SK-N-SH (cell line): ENCODE measurements at regions of chr7 and their contacts with region 1.

Region 1: GRCh38 chr7:122092964-122093797 is 50.9 kb downstream of the AASS start:
- DNase-seq: peak; percentile 26
- H3K4me3 ChIP-seq: no peak overlapping the region
- H3K27ac ChIP-seq: no peak overlapping the region
- H3K4me1 ChIP-seq: no peaks in the 10 kb centered on the region
- H3K27me3 ChIP-seq: no peaks in the 10 kb centered on the region
- CTCF ChIP-seq: peak; percentile 100
- EP300 ChIP-seq: no peak
- RAD21 ChIP-seq: peak; percentile 71

Region 2: DNA sequence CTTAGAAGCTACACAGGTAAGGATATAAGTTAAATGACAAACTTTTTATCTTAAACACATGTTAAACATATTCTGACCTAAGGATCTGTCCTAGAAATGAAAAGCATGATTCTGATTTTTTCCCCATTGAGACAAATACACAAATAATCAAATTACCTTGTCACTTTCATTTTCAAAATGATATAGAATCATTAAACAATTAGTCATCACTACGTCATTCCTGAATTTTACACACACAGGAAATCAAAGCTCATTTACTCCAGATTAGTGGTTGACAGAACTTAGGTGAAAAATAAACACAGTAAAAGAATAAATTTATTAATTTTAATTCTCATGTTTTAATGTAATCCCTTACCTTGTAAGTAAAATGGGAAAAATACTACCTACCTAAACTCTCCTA is 38.1 kb before region 1 on chr7:
- CTCF ChIA-PET with region 1: interaction called, 10 read pairs
- POLR2A ChIA-PET with region 1: no interaction called
- DNase-seq: no peak
- H3K4me3 ChIP-seq: no peak overlapping the region
- H3K27ac ChIP-seq: no peak overlapping the region
- H3K4me1 ChIP-seq: no peaks in the 10 kb centered on the region
- H3K27me3 ChIP-seq: no peaks in the 10 kb centered on the region; the same call in 1 of the 2 replicates
- CTCF ChIP-seq: no peak
- EP300 ChIP-seq: no peak
- RAD21 ChIP-seq: no peak

Region 3: DNA sequence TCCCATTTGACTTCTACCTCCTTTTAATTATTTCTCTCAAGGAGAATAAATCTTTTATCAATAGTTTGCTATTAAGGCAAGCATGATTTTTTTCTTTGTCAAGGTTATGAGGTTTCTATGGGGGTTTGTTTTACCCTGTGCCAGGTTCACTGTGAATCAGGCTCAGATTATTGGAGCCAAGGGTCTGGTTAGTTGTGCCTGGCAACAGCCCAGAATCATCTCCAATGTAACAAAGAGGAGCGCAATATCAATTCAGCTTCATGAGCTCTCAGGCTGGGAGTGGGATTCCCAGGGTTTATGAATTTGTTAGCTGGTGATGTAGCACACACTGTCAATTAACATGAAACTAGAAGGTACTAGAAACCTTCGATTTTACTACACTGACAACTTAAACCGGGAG is 22.3 kb before region 1 on chr7:
- CTCF ChIA-PET with region 1: interaction called, 12 read pairs
- POLR2A ChIA-PET with region 1: no interaction called
- DNase-seq: no peak
- H3K4me3 ChIP-seq: no peak overlapping the region
- H3K27ac ChIP-seq: no peak overlapping the region
- H3K4me1 ChIP-seq: no peaks in the 10 kb centered on the region
- H3K27me3 ChIP-seq: no peaks in the 10 kb centered on the region; the same call in 1 of the 2 replicates
- CTCF ChIP-seq: no peak
- EP300 ChIP-seq: no peak
- RAD21 ChIP-seq: no peak

Region 4: DNA sequence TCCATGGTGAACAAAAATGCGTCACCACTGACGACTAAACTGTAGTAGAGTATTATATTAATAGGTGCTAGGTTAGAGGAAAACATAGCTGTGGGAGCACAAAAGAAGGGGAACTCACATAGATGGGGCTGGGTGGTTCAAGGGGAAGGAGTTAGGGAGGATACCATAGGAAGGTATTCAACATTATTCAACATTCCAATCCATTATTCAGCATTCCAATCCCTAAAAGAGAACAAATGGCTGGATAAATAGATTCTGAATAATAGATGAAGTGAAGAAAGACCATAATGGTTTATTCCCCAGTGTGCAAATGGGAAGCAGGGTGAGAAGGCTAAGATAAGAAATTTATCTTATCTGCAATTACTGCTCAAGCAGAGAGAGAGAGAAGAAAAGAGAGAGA is 10.5 kb before region 1 on chr7:
- CTCF ChIA-PET with region 1: interaction called, 53 read pairs
- POLR2A ChIA-PET with region 1: no interaction called
- DNase-seq: no peak
- H3K4me3 ChIP-seq: no peak overlapping the region
- H3K27ac ChIP-seq: no peak overlapping the region
- H3K4me1 ChIP-seq: no peaks in the 10 kb centered on the region
- H3K27me3 ChIP-seq: no peaks in the 10 kb centered on the region
- CTCF ChIP-seq: no peak
- EP300 ChIP-seq: no peak
- RAD21 ChIP-seq: no peak

Region 5: DNA sequence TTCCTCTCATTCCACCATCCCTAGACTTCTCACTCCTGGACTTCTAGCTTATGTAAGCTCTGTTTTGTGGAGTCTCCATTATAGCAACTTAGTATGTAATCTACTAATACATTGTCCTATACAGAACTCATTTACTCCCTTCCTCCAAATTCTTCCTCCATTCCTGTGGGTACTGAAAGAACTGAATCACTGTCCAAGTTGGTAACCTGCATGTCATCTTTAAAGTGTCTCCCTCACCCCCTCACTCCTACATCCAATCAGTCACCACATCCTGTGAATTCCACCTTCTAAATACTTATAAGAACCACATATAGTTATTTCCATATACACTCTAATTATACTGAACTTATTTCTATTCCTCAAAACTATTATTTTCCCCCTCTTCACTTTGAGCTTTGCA is 30.6 kb after region 1 on chr7:
- CTCF ChIA-PET with region 1: interaction called, 17 read pairs
- POLR2A ChIA-PET with region 1: no interaction called
- DNase-seq: no peak
- H3K4me3 ChIP-seq: no peak overlapping the region
- H3K27ac ChIP-seq: no peak overlapping the region
- H3K4me1 ChIP-seq: no peaks in the 10 kb centered on the region
- H3K27me3 ChIP-seq: peaks cover 14% of the 10 kb centered on the region; the same call in 1 of the 2 replicates
- CTCF ChIP-seq: no peak
- EP300 ChIP-seq: no peak
- RAD21 ChIP-seq: no peak

Region 6: GRCh38 chr7:122135275-122135674 is 42.1 kb after region 1 on chr7:
- CTCF ChIA-PET with region 1: no interaction called
- POLR2A ChIA-PET with region 1: no interaction called
- DNase-seq: no peak
- H3K4me3 ChIP-seq: no peak overlapping the region
- H3K27ac ChIP-seq: no peak overlapping the region
- H3K4me1 ChIP-seq: peaks cover 0 to 5% of the 10 kb centered on the region in 2 experiments; a peak in 2 of 4 replicates
- H3K27me3 ChIP-seq: peaks cover 8% of the 10 kb centered on the region; the same call in 1 of the 2 replicates
- CTCF ChIP-seq: no peak
- EP300 ChIP-seq: no peak
- RAD21 ChIP-seq: no peak

Region 7: DNA sequence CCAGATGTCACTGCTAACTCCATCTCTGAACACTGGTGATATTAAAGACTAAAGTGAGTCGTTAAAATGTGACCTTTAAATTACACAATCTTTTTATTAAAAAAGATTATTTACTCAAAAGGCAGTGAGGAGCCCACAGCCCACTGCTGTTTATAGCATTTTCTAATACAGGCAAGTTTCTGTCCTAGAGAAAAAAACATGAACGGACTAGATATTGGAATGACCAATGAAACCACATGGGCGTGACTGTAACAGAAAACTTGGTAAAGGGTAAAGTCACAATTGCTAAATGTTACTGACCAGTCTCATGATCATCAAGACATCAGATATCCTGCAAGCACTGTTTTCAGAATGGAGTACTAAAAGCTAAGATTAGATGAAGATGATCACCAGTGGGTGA is 132.7 kb after region 1 on chr7:
- CTCF ChIA-PET with region 1: interaction called, 10 read pairs
- POLR2A ChIA-PET with region 1: no interaction called
- DNase-seq: no peak
- H3K4me3 ChIP-seq: no peak overlapping the region
- H3K27ac ChIP-seq: no peak overlapping the region
- H3K4me1 ChIP-seq: no peaks in the 10 kb centered on the region
- H3K27me3 ChIP-seq: no peaks in the 10 kb centered on the region
- CTCF ChIP-seq: no peak
- EP300 ChIP-seq: no peak
- RAD21 ChIP-seq: no peak

Region 8: GRCh38 chr7:122528879-122529481 is 435.8 kb after region 1 on chr7:
- CTCF ChIA-PET with region 1: interaction called, 10 read pairs
- POLR2A ChIA-PET with region 1: no interaction called
- DNase-seq: peak; percentile 17
- H3K4me3 ChIP-seq: no peak overlapping the region; a peak in 1 of 4 replicates
- H3K27ac ChIP-seq: no peak overlapping the region
- H3K4me1 ChIP-seq: no peaks in the 10 kb centered on the region; a peak in 1 of 4 replicates
- H3K27me3 ChIP-seq: no peaks in the 10 kb centered on the region
- CTCF ChIP-seq: peak; percentile 94
- EP300 ChIP-seq: no peak
- RAD21 ChIP-seq: peak; percentile 60